Activated naive CD4-positive, alpha-beta T cell treated with anti-CD3 and anti-CD28 coated beads for 36 hours (primary cell): ENCODE measurements at regions of chr18 and their contacts with region 1.

Region 1: DNA sequence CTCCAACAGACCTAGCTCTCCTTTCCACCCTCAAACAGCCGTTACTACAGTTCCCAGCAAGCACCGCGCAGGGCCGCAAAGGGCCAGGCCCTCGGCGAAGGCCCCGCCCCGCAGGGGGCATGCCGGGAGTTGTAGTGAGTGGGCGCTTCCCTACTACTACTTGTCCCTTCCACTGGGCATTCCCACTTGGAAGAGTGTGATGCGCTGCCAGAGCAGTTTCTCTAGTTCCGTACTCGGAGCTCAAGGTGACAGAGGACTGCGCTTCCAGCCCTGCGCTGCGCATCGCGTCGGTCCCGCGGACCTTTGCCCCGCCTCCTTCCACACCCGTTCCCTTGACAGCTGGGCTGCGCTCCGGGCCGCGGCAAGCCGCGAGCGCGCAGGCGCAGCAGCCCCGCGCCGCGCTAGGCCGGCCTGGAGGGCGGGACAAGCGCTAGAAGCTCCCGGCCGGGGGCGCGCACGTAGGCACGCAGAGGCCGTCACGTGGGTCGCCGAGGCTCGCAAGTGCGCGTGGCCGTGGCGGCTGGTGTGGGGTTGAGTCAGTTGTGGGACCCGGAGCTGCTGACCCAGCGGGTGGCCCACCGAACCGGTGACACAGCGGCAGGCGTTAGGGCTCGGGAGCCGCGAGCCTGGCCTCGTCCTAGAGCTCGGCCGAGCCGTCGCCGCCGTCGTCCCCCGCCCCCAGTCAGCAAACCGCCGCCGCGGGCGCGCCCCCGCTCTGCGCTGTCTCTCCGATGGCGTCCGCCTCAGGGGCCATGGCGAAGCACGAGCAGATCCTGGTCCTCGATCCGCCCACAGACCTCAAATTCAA is at the start of gene VAPA:
- DNase-seq: peak; percentile 93
- H3K4me3 Mint-ChIP-seq: peak within 1 kb of the TSS; percentile 91
- H3K27ac Mint-ChIP-seq: peak within 1 kb of the TSS; percentile 93
- H3K4me1 Mint-ChIP-seq: peaks cover 25% of the 10 kb centered on the region
- H3K27me3 Mint-ChIP-seq: no peaks in the 10 kb centered on the region
- total RNA-seq, gene VAPA: 150 to 159 TPM

Region 2: DNA sequence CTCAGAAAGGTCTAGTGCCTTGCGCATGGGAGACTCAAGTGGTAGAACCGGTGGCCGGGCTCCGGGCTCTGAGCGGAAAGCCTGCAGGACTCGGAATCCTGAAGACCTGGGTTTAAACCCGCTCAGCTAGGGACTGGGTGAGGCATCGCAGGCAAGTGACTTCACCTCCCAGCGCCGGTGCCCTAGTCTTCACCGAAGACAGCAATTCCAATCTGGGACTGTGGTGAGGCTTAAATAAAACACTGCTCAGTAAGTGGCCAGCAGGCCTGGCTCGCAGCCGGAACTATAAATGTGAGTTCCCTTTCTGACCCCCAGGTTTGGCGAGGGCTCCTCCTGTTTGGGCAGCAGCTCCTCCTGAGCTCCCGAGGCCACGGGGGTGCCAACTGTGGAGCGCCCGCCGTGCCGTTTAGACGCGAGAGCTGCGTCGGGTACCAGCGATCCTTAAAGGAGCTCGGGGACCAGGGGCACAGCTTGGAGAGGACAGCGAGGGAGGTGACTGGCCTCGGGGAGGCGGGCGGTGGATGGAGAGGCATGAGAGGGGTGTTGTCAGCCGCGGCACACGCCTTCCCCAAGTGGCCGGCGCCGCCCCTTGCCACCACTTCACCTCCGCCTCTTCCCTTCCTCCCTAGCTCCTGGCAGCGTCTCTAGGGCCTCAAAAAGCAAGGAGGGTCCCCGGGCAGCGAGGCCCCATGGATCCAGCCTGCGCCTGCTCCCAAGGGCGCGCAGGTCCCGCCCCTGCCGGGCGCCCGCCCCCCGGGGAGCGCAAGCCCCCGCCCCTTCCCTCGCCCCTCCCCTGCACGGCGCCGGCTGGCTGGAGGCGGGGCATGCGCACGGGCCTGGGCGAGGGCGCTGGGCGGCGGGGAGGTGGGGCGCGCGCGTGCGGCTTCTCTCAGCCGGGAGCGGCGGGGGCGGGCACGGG is 1209.1 kb before region 1 on chr18:
- CTCF ChIA-PET with region 1: no interaction called
- intact Hi-C with region 1: loop called (anchors 2 kb)
- DNase-seq: peak; percentile 82
- H3K4me3 Mint-ChIP-seq: peak overlapping the region; percentile 80
- H3K27ac Mint-ChIP-seq: no peak overlapping the region
- H3K4me1 Mint-ChIP-seq: peaks cover 12% of the 10 kb centered on the region
- H3K27me3 Mint-ChIP-seq: peaks cover 45% of the 10 kb centered on the region

Region 3: DNA sequence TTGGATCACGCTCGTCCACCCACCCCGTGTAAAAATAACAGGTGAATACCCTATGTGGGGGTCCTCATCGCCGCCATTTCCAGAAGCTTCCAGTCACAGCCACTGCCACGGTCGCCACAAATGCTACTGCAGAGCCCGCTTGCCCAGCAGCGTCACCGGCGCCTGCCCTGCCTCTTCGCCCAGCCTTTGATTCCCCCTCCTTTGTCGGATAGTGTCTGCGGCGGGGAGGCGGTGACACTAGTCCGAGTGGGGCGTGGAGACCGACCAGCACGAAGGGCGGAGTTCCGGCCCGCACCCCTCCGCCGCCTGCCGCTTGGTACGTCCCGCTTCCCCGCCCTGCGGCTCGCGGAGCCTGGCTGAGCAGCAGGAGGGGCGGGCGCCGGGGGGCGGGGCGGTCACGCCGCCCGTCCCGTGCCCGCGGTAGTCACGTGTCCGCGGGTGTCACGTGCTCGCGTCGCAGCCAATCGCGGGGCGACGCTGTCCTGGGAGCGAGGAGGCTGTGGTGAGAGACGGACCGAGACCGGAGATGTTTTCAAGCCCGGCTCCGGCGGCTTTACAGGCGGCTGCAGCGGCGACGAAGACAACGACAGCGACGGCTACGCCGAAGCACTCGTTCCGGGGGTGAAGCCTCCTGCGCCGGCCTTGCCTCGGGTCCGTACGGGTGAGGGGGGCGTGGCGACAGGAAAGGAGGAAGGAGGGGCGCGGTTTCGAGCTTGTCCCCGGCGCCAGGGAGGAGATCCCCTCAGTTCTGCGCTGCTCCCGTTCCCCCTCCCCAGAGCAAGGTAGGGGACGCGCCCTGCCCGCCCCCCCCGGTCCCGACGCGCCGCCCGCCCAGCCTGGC is 777.2 kb before region 1 on chr18 and contains the start of gene ANKRD12:
- CTCF ChIA-PET with region 1: no interaction called
- intact Hi-C with region 1: loop called (anchors 2 kb)
- DNase-seq: peak; percentile 96
- H3K4me3 Mint-ChIP-seq: peak within 1 kb of the TSS; percentile 96
- H3K27ac Mint-ChIP-seq: peak within 1 kb of the TSS; percentile 97
- H3K4me1 Mint-ChIP-seq: peaks cover 63% of the 10 kb centered on the region
- H3K27me3 Mint-ChIP-seq: no peaks in the 10 kb centered on the region
- total RNA-seq, gene ANKRD12: 37.5 to 40.0 TPM

Region 4: DNA sequence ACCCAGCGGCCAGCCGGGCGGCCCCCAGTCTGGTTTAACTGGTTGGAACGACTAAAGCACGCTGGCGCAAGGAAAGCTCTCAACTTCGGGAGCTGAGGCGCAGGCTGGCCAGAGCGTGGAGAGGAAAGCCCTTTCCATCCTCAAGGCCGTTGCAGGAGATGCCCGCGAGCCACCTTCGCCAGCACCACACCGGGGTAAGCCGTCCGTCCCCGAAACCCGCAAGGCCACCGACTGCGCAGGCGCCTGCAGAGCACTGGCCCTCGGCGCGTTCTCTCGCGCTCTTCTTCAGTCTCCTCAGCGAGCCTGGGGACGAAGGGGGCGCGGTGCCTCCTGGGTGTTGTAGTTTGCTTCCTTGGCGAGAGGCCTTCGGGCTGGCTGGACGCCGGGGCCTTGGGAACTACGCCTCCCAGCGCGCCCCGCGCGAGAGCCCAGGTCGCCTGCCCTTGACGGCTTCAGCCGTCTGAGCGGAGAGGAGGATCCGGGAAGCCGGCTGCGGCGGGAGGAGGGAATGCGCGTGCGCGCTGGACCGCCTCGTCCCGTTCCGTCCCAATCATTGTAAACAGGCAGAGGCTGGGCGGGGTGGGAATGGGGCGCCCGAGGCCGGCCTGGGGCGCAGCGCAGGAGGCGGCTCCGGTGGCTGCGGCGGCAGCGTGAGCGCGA is 438.6 kb before region 1 on chr18 and contains the start of gene RALBP1:
- CTCF ChIA-PET with region 1: no interaction called
- intact Hi-C with region 1: loop called (anchors 1 kb)
- DNase-seq: peak; percentile 99
- H3K4me3 Mint-ChIP-seq: peak within 1 kb of the TSS; percentile 89
- H3K27ac Mint-ChIP-seq: peak within 1 kb of the TSS; percentile 90
- H3K4me1 Mint-ChIP-seq: peaks cover 26% of the 10 kb centered on the region
- H3K27me3 Mint-ChIP-seq: peaks cover 3% of the 10 kb centered on the region
- total RNA-seq, gene RALBP1: 46.9 to 51.1 TPM

Region 5: GRCh38 chr18:9561759-9562158 is 352.0 kb before region 1 on chr18:
- CTCF ChIA-PET with region 1: no interaction called
- intact Hi-C with region 1: no loop called
- DNase-seq: no peak
- H3K4me3 Mint-ChIP-seq: no peak overlapping the region
- H3K27ac Mint-ChIP-seq: no peak overlapping the region
- H3K4me1 Mint-ChIP-seq: no peaks in the 10 kb centered on the region
- H3K27me3 Mint-ChIP-seq: no peaks in the 10 kb centered on the region

Region 6: DNA sequence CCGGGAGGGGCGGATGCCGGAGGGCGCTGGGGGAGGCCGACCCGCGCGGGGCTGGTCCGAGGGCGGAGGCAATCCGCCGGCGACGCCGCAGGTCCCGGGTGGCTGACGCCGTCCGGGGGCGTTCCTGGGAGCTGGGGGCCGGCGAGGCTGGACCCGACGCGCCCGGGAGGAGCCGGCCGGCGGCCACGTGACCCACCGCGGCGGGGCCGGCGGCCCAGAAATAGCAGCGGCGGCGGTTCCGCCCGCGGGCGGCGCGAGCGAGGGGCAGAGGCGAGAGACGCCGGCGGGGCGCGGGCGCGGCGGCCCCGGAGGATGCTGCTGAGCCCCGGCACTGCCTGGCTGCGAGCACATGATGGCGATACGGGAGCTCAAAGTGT is 205.7 kb before region 1 on chr18 and contains the start of gene RAB31:
- CTCF ChIA-PET with region 1: no interaction called
- intact Hi-C with region 1: loop called (anchors 1 kb)
- DNase-seq: peak; percentile 24
- H3K4me3 Mint-ChIP-seq: peak within 1 kb of the TSS; percentile 74
- H3K27ac Mint-ChIP-seq: no peak within 1 kb of the TSS
- H3K4me1 Mint-ChIP-seq: peaks cover 28% of the 10 kb centered on the region
- H3K27me3 Mint-ChIP-seq: peaks cover 80% of the 10 kb centered on the region
- total RNA-seq, gene RAB31: 0.38 to 0.89 TPM

Region 7: DNA sequence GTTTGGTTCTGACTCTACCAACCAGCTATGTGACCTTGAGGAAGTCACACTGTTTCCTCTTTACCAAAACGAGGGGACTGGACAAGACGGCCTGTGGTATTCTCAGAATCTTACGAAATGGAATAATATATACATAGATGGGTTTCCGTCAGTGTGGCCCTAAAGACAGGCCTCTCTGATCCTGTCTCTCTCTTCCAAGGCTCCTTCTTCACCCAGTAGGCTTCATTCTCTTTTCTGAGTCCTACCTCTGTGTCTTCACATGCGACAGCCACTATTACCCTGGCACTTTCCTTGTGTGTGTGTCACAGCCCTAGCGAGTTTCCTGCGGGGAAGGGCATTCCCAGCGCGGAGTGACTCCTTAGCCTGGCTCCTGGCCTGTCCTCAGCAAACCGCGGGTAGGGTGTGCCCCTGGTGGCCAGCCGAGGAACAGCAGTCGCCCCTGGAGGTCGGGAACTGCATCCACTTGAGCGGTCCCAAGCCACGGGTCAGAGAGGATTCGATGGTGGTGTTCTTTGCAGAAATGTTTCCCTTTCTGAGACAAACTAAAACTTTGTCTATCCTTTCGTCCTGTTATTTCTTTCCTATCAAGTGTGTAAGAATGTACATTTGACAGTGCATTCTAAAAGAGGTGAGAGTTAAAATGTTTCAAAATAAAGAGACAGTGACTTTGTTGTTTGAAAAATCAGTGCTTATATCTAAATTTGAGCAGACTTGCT is 142.3 kb before region 1 on chr18:
- CTCF ChIA-PET with region 1: no interaction called
- intact Hi-C with region 1: no loop called
- DNase-seq: peak; percentile 73
- H3K4me3 Mint-ChIP-seq: no peak overlapping the region
- H3K27ac Mint-ChIP-seq: no peak overlapping the region
- H3K4me1 Mint-ChIP-seq: peaks cover 2% of the 10 kb centered on the region
- H3K27me3 Mint-ChIP-seq: peaks cover 26% of the 10 kb centered on the region

Region 8: GRCh38 chr18:9951022-9951859 is 37.5 kb after region 1 on chr18:
- CTCF ChIA-PET with region 1: interaction called, 3 read pairs
- intact Hi-C with region 1: loop called (anchors 2 kb)
- DNase-seq: peak; percentile 34
- H3K4me3 Mint-ChIP-seq: no peak overlapping the region
- H3K27ac Mint-ChIP-seq: peak overlapping the region; percentile 54
- H3K4me1 Mint-ChIP-seq: no peaks in the 10 kb centered on the region
- H3K27me3 Mint-ChIP-seq: no peaks in the 10 kb centered on the region

Region 9: GRCh38 chr18:11851146-11851805 is 1937.5 kb after region 1 on chr18 and contains the start of gene CHMP1B:
- CTCF ChIA-PET with region 1: no interaction called
- intact Hi-C with region 1: loop called (anchors 5 kb)
- DNase-seq: peak; percentile 98
- H3K4me3 Mint-ChIP-seq: peak within 1 kb of the TSS; percentile 100
- H3K27ac Mint-ChIP-seq: peak within 1 kb of the TSS; percentile 100
- H3K4me1 Mint-ChIP-seq: peaks cover 31% of the 10 kb centered on the region
- H3K27me3 Mint-ChIP-seq: no peaks in the 10 kb centered on the region
- total RNA-seq, gene CHMP1B: 23.2 TPM